Activated CD4-positive, alpha-beta T cell treated with anti-CD3 and anti-CD28 coated beads, Interleukin-2, amount 10 ng/mL, durations not matched to agents 24 days and 14 days (primary cell): ENCODE measurements at regions of chr15 and their contacts with region 1.

Region 1: GRCh38 chr15:75836953-75837321 is 6.3 kb upstream of the UBE2Q2 start:
- DNase-seq: peak; percentile 85
- H3K4me3 Mint-ChIP-seq: no peak overlapping the region
- H3K27ac Mint-ChIP-seq: no peak overlapping the region
- H3K4me1 Mint-ChIP-seq: peaks cover 4% of the 10 kb centered on the region
- H3K27me3 Mint-ChIP-seq: peaks cover 11% of the 10 kb centered on the region

Region 2: GRCh38 chr15:75758071-75758872 is 78.7 kb before region 1 on chr15:
- intact Hi-C with region 1: no loop called
- DNase-seq: peak; percentile 91
- H3K4me3 Mint-ChIP-seq: peak overlapping the region; percentile 95
- H3K27ac Mint-ChIP-seq: peak overlapping the region; percentile 94
- H3K4me1 Mint-ChIP-seq: peaks cover 16% of the 10 kb centered on the region
- H3K27me3 Mint-ChIP-seq: peaks cover 2% of the 10 kb centered on the region

Region 3: DNA sequence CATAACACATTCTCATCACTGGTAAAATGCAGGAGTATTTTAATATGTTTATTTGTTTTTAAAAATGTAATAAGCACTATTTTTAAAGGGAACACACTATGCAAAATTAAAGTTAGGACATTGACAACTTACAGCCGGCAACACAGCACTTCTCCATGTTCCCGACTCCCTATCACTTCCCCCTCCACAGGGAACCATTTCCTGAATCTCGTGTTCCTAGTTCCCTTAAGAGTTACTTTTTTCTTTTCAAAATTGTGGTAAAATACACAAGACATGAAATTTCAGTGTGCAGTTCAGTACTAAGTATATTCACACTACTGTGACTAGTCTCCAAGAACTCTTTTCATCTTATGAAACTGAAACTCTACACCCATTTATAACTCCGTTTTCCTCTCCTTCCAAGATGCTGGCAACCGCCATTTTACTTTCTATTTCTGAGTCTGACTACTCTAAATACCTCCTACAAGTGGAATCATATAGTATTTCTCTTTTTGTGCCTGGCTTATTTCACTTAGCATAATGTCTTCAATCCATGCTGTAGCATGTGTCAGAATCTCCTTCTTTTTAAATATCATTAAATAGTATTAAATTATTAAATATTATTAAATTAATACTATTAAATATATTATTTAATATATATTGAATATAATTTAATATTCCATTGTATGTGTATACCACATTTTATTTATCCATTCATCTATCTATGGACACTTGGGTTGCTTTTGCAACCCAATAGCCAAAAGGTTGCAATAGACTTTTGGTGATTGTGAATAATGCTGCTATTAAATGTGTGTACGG is 19.6 kb before region 1 on chr15:
- intact Hi-C with region 1: loop called (anchors 2 kb)
- DNase-seq: peak; percentile 77
- H3K4me3 Mint-ChIP-seq: peak overlapping the region; percentile 72
- H3K27ac Mint-ChIP-seq: peak overlapping the region; percentile 80
- H3K4me1 Mint-ChIP-seq: peaks cover 19% of the 10 kb centered on the region
- H3K27me3 Mint-ChIP-seq: no peaks in the 10 kb centered on the region

Region 4: GRCh38 chr15:75867449-75867848 is 30.5 kb after region 1 on chr15:
- intact Hi-C with region 1: no loop called
- DNase-seq: no peak
- H3K4me3 Mint-ChIP-seq: no peak overlapping the region
- H3K27ac Mint-ChIP-seq: no peak overlapping the region
- H3K4me1 Mint-ChIP-seq: peaks cover 17% of the 10 kb centered on the region
- H3K27me3 Mint-ChIP-seq: no peaks in the 10 kb centered on the region

Region 5: GRCh38 chr15:75903331-75904239 is 66.6 kb after region 1 on chr15 and contains the start of gene FBXO22:
- intact Hi-C with region 1: loop called (anchors 2 kb)
- DNase-seq: peak; percentile 98
- H3K4me3 Mint-ChIP-seq: peak within 1 kb of the TSS; percentile 98
- H3K27ac Mint-ChIP-seq: peak within 1 kb of the TSS; percentile 95
- H3K4me1 Mint-ChIP-seq: peaks cover 40% of the 10 kb centered on the region
- H3K27me3 Mint-ChIP-seq: no peaks in the 10 kb centered on the region
- total RNA-seq, gene FBXO22: 51.7 and 51.9 TPM in 2 replicates

Region 6: DNA sequence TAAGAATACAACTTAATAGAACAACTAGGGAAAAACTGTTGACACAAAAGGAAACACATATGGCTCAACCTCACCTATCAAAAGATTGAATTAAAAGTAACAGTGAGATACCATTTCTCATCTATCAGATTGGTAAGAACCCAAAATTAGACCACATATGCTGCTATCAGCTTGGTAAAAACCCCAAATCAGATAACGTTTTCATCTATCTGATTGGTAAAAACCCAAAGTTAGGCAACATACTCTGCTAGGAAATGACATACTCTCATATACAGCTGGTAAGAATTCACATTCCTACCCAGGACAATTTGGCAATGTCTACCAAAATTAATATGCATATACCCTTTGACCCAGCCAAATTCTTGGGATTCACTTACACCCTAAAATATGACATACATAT is 149.0 kb after region 1 on chr15:
- intact Hi-C with region 1: no loop called
- DNase-seq: no peak
- H3K4me3 Mint-ChIP-seq: no peak overlapping the region
- H3K27ac Mint-ChIP-seq: no peak overlapping the region
- H3K4me1 Mint-ChIP-seq: no peaks in the 10 kb centered on the region
- H3K27me3 Mint-ChIP-seq: peaks cover 26% of the 10 kb centered on the region

Region 7: GRCh38 chr15:76108021-76108723 is 271.2 kb after region 1 on chr15:
- intact Hi-C with region 1: no loop called
- DNase-seq: no peak
- H3K4me3 Mint-ChIP-seq: no peak overlapping the region
- H3K27ac Mint-ChIP-seq: no peak overlapping the region
- H3K4me1 Mint-ChIP-seq: no peaks in the 10 kb centered on the region
- H3K27me3 Mint-ChIP-seq: peaks cover 8% of the 10 kb centered on the region